ENCODE measurements at regions of chr17 and their contacts with region 1.

Region 1: DNA sequence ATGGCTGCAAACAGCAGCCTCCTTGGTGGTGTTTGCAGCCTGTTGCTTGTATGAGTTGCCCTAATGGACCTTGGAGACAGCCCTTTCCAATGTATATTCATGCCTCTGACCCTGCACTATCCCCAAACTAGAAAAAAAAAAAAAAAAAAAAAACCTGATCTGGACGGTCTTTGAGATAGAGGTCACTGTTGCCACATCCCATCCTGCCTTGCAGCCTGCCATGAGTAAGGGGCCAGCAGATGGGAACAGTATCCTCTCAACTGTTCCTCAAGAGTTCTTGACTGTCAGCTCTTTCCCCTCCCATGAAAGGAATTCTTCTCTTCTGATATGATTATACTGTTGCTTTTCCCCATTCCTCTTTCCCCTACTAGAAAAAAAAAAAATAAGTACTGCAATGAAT is 152.4 kb downstream of the SSH2 start:
- DNase-seq: no peak
- H3K4me3 ChIP-seq: no peak overlapping the region
- H3K27me3 ChIP-seq: no peaks in the 10 kb centered on the region
- CTCF ChIP-seq: no peak

Region 2: GRCh38 chr17:29617125-29617480 is 160.6 kb before region 1 on chr17:
- CTCF ChIA-PET with region 1: interaction called, 19 read pairs
- POLR2A ChIA-PET with region 1: no interaction called
- DNase-seq: no peak
- H3K4me3 ChIP-seq: no peak overlapping the region
- H3K27me3 ChIP-seq: no peaks in the 10 kb centered on the region
- CTCF ChIP-seq: peak; percentile 68

Region 3: GRCh38 chr17:29733166-29733565 is 44.5 kb before region 1 on chr17:
- CTCF ChIA-PET with region 1: no interaction called
- POLR2A ChIA-PET with region 1: interaction called, 10 read pairs
- DNase-seq: no peak
- H3K4me3 ChIP-seq: no peak overlapping the region
- H3K27me3 ChIP-seq: no peaks in the 10 kb centered on the region
- CTCF ChIP-seq: no peak

Region 4: DNA sequence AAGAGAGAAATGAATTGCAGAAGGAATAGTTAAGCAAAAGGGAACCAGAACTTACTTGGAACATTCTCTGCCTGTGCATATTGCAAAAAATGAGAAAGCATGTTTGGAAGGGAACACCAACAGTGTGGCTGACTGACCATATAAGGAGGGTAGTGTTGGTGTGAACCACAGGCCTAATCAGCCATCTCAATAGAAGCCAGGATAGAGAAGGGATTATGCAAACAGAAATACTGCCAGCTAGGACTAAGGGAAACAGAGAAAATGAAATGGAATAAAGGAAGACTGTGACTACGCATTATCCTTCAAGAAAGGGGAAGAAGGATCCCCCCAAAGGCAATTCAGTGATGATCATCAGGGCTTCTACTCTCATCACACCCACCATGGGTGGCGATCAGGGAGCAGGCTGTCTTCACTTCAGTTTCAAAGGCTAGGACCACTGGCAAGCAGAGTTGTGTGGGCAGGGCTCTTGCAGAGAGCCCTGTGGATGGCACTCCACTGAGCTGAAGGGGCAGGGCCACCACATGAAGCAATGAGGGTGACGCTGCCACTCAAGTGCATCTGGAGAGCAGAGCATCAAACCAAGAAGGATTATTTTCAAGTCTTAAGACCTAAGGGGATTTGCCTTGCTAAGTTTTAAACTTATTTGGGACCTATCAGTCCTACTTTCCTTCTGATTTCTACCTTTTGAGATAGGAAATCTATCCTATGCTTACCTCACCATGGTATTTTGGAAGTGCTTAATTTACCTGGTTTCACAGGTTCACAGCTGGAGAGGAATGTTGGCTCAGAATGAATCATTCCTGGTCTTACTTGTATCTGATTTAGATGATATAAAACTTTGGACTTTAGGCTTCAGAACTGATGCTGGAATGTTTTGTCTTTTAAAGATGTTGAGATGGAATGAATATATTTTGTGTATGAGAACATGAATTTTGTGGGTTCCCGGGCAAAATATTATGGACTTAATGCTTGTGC is 11.8 kb after region 1 on chr17:
- CTCF ChIA-PET with region 1: interaction called, 17 read pairs
- POLR2A ChIA-PET with region 1: no interaction called
- DNase-seq: no peak
- H3K4me3 ChIP-seq: no peak overlapping the region
- H3K27me3 ChIP-seq: no peaks in the 10 kb centered on the region
- CTCF ChIP-seq: no peak

Region 5: DNA sequence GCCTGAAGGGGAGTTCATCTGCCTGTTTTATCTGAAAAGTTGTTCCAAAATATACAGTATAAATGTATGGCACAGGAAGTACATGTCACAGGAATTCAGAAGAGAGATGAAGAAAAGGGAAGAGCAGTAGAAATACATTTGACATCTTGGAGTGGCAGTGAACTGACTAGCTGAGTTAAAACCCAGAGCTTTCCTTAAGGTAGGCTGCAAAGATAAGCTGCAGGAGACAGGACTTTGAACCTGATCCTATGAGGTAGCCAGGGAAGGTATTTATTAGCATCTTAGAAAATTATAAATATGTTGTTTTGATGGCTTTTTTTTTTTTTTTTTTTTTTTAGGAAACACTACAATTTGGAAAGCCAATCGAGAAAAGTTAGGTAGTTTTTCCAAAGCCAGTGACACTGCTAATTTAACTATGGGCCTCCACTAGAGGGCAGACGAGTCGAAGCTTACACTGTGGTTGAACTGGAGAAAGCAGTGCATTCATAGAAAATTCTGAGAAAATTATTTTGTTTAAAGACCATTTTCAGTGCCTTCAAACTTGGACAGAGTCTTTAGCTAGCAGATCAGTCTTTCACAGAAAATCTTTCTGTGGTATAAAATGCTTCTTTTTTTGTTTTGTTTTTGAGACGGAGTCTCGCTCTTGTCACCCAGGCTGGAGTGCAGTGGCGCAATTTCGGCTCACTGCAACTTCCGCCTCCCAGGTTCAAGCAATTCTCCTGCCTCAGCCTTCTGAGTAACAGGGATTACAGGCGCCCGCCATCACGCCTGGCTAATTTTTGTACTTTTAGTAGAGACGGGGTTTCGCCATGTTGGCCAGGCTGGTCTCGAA is 30.1 kb after region 1 on chr17:
- CTCF ChIA-PET with region 1: interaction called, 10 read pairs
- POLR2A ChIA-PET with region 1: no interaction called
- DNase-seq: no peak
- H3K4me3 ChIP-seq: no peak overlapping the region
- H3K27me3 ChIP-seq: no peaks in the 10 kb centered on the region
- CTCF ChIP-seq: peak; percentile 73

Measured in BJ (cell line).